ENCODE measurements at regions of chr2 and their contacts with region 1.

Region 1: GRCh38 chr2:161223139-161223732 is 63.0 kb downstream of the TANK start:
- DNase-seq: no peak
- CTCF ChIP-seq: peak; percentile 52

Region 2: GRCh38 chr2:161190050-161190449 is 33.2 kb before region 1 on chr2:
- CTCF ChIA-PET with region 1: no interaction called
- POLR2A ChIA-PET with region 1: no interaction called
- DNase-seq: no peak
- CTCF ChIP-seq: no peak

Region 3: DNA sequence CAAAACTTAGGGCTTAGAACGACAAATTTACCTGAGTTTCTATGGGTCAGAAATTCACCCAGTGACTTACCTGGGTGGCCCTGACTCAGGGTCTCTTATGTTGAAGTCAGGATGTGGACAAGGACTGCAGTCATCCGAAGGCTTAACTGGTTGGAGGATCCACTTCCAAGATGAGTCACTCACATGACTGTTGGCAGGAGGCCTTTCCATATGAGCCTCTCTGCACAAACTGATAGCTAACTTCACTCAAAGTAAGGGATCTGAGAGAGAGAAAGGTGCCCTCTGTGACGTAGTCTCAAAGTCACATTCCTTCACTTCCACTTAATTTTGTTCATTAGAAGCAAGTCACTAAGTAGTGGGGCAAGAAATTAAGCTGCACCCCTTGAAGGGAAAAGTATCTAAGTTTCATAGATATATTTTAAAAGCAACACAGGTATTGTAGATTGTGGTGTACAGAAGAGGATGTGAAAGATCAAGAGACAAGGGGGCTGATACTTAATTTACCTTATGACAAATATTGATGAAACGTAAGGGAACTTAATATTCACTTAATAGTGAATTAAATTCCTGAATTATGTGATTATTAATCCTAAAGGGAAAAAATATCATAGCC is 14.6 kb before region 1 on chr2:
- CTCF ChIA-PET with region 1: interaction called, 15 read pairs
- POLR2A ChIA-PET with region 1: no interaction called
- DNase-seq: no peak
- CTCF ChIP-seq: no peak

Region 4: GRCh38 chr2:161238560-161239325 is 15.5 kb after region 1 on chr2:
- CTCF ChIA-PET with region 1: interaction called, 23 read pairs
- POLR2A ChIA-PET with region 1: no interaction called
- DNase-seq: peak; percentile 46
- CTCF ChIP-seq: peak; percentile 1

Region 5: DNA sequence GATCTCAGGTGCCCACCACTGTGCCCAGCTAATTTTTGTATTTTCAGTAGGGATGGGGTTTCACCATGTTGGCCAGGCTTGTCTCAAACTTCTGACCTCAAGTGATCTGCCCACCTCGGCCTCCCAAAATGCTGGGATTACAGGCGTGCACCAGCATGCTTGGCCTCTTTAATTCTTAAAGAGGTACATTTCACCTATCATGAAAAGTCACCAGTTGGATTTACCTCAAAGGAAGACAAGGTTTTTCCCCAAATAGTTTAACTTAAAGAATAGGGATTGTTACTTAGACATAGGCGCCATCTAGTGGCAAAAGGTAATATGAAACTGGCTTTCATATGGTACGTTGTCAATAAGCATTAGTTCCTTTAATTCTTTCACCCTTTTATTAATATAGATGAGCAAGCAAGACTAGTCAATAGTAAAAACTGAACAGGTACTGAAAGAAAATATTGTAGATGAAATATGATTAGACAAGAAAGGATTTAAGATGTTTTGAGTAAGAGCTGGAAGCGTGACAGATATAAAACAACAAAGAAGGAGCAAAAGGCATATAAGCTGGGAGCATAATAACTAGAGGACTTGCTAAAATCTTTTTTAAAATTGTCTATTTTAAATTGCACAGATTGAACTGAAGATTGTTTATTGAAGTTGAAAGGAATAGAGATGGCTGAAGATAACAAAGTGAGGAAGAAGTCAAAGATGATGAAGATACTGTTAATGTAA is 50.0 kb after region 1 on chr2:
- CTCF ChIA-PET with region 1: interaction called, 43 read pairs
- POLR2A ChIA-PET with region 1: no interaction called
- DNase-seq: peak; percentile 37
- CTCF ChIP-seq: peak; percentile 64

Measured in GM10248 (cell line).